ENCODE measurements at regions of chr1 and their contacts with region 1.

Region 1: GRCh38 chr1:211578640-211579433 is at the start of gene SLC30A1:
- DNase-seq: peak; percentile 99
- ATAC-seq: peak; percentile 87
- H3K4me3 ChIP-seq: peak within 1 kb of the TSS; percentile 66 to 92 (median 77)
- H3K4me3 Mint-ChIP-seq: peak within 1 kb of the TSS; percentile 99
- H3K27ac ChIP-seq: peak within 1 kb of the TSS in 1 of 2 donors; percentile 77
- H3K27ac Mint-ChIP-seq: peak within 1 kb of the TSS; percentile 94
- H3K4me1 ChIP-seq: peaks cover 25 to 26% of the 10 kb centered on the region in 2 donors
- H3K4me1 Mint-ChIP-seq: peaks cover 38% of the 10 kb centered on the region
- H3K27me3 ChIP-seq: no peaks in the 10 kb centered on the region
- H3K27me3 Mint-ChIP-seq: no peaks in the 10 kb centered on the region
- CTCF ChIP-seq: no peak
- total RNA-seq, gene SLC30A1: 12.2 and 12.3 TPM in 2 replicates

Region 2: GRCh38 chr1:211323156-211324063 is 255.4 kb before region 1 on chr1:
- CTCF ChIA-PET with region 1: interaction called, 3 read pairs
- POLR2A ChIA-PET with region 1: no interaction called
- intact Hi-C with region 1: loop called (anchors 5 kb)
- DNase-seq: peak; percentile 81
- ATAC-seq: peak; percentile 56
- H3K4me3 ChIP-seq: no peak overlapping the region
- H3K4me3 Mint-ChIP-seq: no peak overlapping the region
- H3K27ac ChIP-seq: no peak overlapping the region
- H3K27ac Mint-ChIP-seq: no peak overlapping the region
- H3K4me1 ChIP-seq: peaks cover 28 to 34% of the 10 kb centered on the region in 2 donors
- H3K4me1 Mint-ChIP-seq: peaks cover 39% of the 10 kb centered on the region
- H3K27me3 ChIP-seq: no peaks in the 10 kb centered on the region
- H3K27me3 Mint-ChIP-seq: no peaks in the 10 kb centered on the region
- CTCF ChIP-seq: peak; percentile 94

Region 3: GRCh38 chr1:211625040-211625439 is 46.2 kb after region 1 on chr1:
- CTCF ChIA-PET with region 1: interaction called, 7 read pairs
- POLR2A ChIA-PET with region 1: no interaction called
- intact Hi-C with region 1: loop called (anchors 1 kb)
- DNase-seq: peak; percentile 55
- ATAC-seq: peak; percentile 69
- H3K4me3 ChIP-seq: no peak overlapping the region
- H3K4me3 Mint-ChIP-seq: no peak overlapping the region
- H3K27ac ChIP-seq: no peak overlapping the region
- H3K27ac Mint-ChIP-seq: no peak overlapping the region
- H3K4me1 ChIP-seq: no peaks in the 10 kb centered on the region
- H3K4me1 Mint-ChIP-seq: no peaks in the 10 kb centered on the region
- H3K27me3 ChIP-seq: no peaks in the 10 kb centered on the region
- H3K27me3 Mint-ChIP-seq: peaks cover 14% of the 10 kb centered on the region
- CTCF ChIP-seq: peak; percentile 32

Region 4: DNA sequence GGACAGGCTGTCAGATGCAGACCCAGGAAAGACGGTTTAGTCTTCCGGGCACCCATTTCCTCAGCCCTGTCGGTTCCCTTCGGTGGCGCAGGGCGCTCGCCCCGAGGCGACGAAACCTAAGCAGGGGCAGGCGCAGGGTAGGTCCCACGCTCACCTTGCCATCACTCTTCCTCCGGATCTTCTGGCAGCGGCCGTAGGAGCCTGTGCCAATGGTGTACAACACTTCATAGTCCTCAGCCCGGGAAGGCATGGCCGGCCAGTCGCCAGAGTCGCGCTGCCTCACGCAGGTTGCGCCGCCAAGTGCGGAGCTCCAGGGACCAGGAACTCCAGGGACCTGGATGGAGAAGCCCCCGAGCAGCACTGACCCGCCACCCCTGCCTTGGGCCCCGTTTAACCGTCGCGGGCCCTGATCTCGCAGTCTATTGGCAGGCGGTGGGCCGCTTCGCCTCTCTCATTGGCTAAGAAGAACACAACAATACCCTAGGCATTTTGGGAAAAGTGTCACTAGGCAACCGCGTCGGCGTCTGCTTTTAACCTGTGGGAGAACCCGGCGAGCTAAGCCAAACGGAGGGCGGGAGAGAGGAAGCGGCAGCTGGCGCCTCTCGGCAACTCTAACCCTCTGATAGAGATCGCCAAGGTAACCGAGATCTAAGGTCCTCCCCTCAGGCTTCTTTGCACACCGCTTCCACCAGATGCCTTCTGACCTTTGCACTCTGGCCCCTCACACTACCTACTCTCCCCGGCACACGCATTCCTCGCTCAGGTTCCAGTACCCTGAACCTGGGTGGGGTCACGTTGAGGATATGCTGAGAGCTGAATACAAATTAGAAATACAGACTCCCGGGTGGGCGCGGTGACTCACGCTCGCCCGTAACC is 96.6 kb after region 1 on chr1 and contains the start of gene NEK2:
- CTCF ChIA-PET with region 1: interaction called, 11 read pairs
- POLR2A ChIA-PET with region 1: no interaction called
- intact Hi-C with region 1: loop called (anchors 1 kb)
- DNase-seq: peak; percentile 82
- ATAC-seq: peak; percentile 88
- H3K4me3 ChIP-seq: peak within 1 kb of the TSS; percentile 19 to 80 (median 68)
- H3K4me3 Mint-ChIP-seq: peak within 1 kb of the TSS; percentile 93
- H3K27ac ChIP-seq: peak within 1 kb of the TSS in 1 of 2 donors; percentile 49
- H3K27ac Mint-ChIP-seq: peak within 1 kb of the TSS; percentile 66
- H3K4me1 ChIP-seq: peaks cover 21 to 30% of the 10 kb centered on the region in 2 donors
- H3K4me1 Mint-ChIP-seq: peaks cover 35% of the 10 kb centered on the region
- H3K27me3 ChIP-seq: no peaks in the 10 kb centered on the region
- H3K27me3 Mint-ChIP-seq: no peaks in the 10 kb centered on the region
- CTCF ChIP-seq: no peak
- total RNA-seq, gene NEK2: 0.32 TPM in 1 of 2 replicates, not detected in the other

Region 5: GRCh38 chr1:211944733-211945500 is 366.1 kb after region 1 on chr1:
- CTCF ChIA-PET with region 1: no interaction called
- POLR2A ChIA-PET with region 1: no interaction called
- intact Hi-C with region 1: loop called (anchors 10 kb)
- DNase-seq: no peak
- ATAC-seq: no peak
- H3K4me3 ChIP-seq: no peak overlapping the region
- H3K4me3 Mint-ChIP-seq: no peak overlapping the region
- H3K27ac ChIP-seq: no peak overlapping the region
- H3K27ac Mint-ChIP-seq: no peak overlapping the region
- H3K4me1 ChIP-seq: peaks cover 5 to 9% of the 10 kb centered on the region in 2 donors
- H3K4me1 Mint-ChIP-seq: peaks cover 9% of the 10 kb centered on the region
- H3K27me3 ChIP-seq: no peaks in the 10 kb centered on the region
- H3K27me3 Mint-ChIP-seq: no peaks in the 10 kb centered on the region
- CTCF ChIP-seq: no peak

Region 6: GRCh38 chr1:213015099-213016050 is 1436.5 kb after region 1 on chr1 and contains the start of gene ANGEL2:
- CTCF ChIA-PET with region 1: no interaction called
- POLR2A ChIA-PET with region 1: no interaction called
- intact Hi-C with region 1: loop called (anchors 1 kb)
- DNase-seq: peak; percentile 97
- ATAC-seq: peak; percentile 96
- H3K4me3 ChIP-seq: peak within 1 kb of the TSS; percentile 65 to 89 (median 77)
- H3K4me3 Mint-ChIP-seq: peak within 1 kb of the TSS; percentile 98
- H3K27ac ChIP-seq: peak within 1 kb of the TSS; percentile 81 to 92
- H3K27ac Mint-ChIP-seq: peak within 1 kb of the TSS; percentile 99
- H3K4me1 ChIP-seq: peaks cover 7 to 14% of the 10 kb centered on the region in 2 donors
- H3K4me1 Mint-ChIP-seq: peaks cover 31% of the 10 kb centered on the region
- H3K27me3 ChIP-seq: no peaks in the 10 kb centered on the region
- H3K27me3 Mint-ChIP-seq: no peaks in the 10 kb centered on the region
- CTCF ChIP-seq: no peak
- total RNA-seq, gene ANGEL2: 86.0 and 94.2 TPM in 2 replicates